Activated naive CD4-positive, alpha-beta T cell treated with anti-CD3 and anti-CD28 coated beads for 36 hours (primary cell): ENCODE measurements at regions of chr11 and their contacts with region 1.

Region 1: GRCh38 chr11:6298605-6299004 is 21.7 kb downstream of the CAVIN3 start:
- DNase-seq: peak; percentile 43
- H3K4me3 Mint-ChIP-seq: no peak overlapping the region
- H3K27ac Mint-ChIP-seq: no peak overlapping the region
- H3K4me1 Mint-ChIP-seq: no peaks in the 10 kb centered on the region
- H3K27me3 Mint-ChIP-seq: peaks cover 4% of the 10 kb centered on the region

Region 2: GRCh38 chr11:6022956-6023355 is 275.6 kb before region 1 on chr11:
- CTCF ChIA-PET with region 1: no interaction called
- intact Hi-C with region 1: loop called (anchors 1 kb)
- DNase-seq: peak; percentile 28
- H3K4me3 Mint-ChIP-seq: no peak overlapping the region
- H3K27ac Mint-ChIP-seq: no peak overlapping the region
- H3K4me1 Mint-ChIP-seq: no peaks in the 10 kb centered on the region
- H3K27me3 Mint-ChIP-seq: peaks cover 20% of the 10 kb centered on the region